ENCODE measurements at regions of chr11 and their contacts with region 1.

Region 1: DNA sequence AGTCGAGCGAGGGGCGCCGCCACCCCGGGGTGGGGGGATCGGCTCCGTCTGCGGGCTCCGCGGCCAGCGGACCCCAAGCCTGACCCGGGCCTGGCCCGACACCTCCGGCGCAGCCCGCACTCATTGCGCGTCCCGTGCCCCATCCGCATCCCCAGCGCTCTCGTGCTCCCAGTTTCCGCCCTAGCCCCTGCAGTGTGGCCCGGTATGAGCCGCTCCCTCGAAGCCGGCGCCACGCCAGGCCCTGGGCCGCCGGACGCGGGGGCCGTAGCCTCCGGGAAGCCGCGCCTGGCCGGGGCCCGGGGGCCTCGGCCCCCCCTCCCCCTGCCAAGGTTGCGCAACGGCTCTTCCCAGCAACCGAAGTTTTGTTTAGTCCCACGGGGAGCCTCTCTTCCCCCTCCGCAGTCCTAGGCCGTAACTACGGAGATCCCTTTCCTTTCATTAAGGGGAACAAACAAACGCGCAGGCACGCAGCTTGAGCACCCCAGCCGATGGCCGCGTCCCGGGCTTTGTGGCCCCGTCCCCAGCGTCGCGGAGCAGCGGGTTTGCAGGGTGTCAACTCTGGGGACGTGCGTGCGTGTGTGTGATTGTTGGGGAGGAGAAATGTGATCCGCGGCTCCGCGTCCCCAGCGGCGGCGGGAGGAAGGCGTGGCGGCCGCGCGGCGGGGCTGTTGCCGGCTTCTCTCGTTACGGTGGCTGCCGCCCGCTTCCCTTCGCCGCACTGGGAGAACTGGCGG is 883 bp downstream of the HIPK3 start:
- DNase-seq: peak; percentile 54 to 94 (median 74)

Region 2: DNA sequence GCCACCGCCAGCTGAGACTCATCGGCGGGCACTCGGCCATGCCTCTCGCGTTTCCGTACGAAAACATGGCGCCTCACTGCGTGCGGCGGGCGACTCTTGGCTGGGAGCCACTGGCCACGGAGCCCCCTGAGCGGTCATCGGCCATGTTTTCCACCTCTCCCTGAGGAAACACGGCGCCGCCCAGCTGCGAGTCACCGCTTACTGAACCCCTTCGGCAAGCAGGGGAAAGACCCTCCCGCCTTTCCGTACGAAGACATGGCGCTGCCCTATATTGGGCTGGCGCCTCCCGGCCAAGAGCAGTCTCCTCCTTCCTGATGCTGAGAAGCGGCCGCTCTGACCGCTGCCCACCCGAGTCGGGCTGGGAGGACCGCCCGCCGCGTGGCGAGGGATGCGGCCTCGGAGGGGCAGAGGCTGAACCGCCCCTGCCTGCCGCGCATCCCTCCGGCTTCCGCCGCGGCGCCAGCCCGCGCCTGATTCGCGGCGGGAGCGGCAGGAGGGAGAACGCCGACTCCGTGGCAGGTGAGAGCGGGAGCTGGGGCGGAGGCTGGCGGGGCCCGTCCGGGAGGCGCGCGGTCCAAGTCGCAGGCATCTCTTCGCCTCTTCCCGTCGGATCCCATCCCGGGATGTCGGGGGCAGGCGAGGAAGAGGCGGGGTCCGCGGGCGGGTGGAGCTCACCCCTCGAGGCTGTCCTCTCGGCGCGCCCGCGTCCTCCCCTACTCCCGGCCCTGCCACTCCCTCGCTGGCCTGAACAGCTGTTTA is 218.6 kb before region 1 on chr11 and contains the start of gene TCP11L1:
- intact Hi-C with region 1: loop called (anchors 5 kb)
- DNase-seq: peak; percentile 91 to 99 (median 93)

Region 3: DNA sequence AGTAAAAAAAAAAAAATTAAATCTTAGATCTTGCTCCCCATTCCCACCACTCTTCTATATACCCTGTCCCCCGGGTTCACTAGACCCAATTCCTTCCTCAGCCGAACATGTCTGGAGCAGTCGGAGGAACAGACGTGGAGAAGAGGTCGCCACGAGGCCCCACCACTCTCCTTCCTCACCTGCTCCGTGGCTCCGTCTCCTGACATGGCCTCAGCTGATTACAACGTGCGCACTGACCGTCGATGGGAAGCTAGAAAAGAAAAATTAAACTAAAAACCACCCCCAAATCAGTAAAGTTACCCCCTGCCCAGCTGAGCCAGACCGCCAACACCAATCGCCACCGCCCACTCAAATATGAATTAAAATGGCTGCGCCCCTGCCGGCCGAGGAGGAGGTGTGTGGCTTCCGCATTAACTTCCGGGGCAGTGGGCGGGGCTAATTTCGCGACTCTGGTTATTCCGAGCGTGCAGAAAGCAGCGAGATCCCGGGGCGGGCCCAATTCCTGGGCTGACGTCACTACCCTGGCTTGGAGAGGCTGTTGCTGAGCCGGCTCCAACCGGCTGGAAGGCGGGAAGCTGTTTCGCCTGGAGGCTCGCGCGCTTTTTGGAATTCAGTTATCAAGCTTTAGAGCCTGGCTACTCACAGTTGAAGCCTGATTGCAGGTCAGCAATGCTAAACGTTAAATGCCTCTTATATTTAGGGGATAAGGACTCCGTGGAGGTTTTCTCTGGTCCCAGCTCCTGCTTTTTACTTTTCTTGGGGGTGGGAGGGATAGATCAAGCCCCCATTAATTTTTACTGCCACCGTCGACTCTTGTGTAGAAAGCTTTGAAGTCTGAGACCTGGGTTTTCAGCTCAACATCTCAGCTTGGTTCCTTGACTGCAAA is 96.7 kb before region 1 on chr11 and contains the start of gene CSTF3:
- intact Hi-C with region 1: loop called (anchors 2 kb)
- DNase-seq: peak; percentile 100

Region 4: DNA sequence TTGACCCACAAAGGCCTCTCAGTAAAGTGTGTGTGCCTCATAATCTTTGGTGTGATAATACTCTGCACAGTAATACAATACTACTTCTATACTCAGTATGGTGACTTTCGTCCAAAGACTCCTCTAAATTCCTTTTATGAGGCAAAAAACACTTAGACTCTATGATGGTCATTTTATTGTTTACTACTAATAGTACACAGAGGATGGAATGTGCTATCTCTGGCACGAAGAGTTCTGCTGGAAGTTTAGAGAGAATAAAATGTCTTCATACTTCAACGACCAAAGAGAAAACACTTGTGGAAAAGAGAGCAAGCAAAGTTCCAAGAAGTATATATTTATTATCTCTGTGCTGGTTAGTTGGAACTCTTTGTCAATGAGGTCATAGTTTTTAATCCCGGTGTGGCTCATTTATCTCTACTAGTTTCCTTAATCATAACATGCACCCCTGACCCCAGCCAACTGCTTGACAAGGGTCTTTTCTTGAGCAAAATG is 89.3 kb before region 1 on chr11:
- intact Hi-C with region 1: loop called (anchors 2 kb)
- DNase-seq: no peak

Region 5: GRCh38 chr11:33329705-33330329 is 71.8 kb after region 1 on chr11:
- intact Hi-C with region 1: loop called (anchors 2 kb)
- DNase-seq: peak in 6 of 10 donors; percentile 15 to 87 (median 40)

Measured in posterior cingulate gyrus (tissue), 11 donors.